Activated CD8-positive, alpha-beta memory T cell treated with anti-CD3 and anti-CD28 coated beads, Interleukin-2, amount 10 ng/mL, durations not matched to agents 7 days and 5 days (primary cell): ENCODE measurements at regions of chr4 and their contacts with region 1.

Region 1: DNA sequence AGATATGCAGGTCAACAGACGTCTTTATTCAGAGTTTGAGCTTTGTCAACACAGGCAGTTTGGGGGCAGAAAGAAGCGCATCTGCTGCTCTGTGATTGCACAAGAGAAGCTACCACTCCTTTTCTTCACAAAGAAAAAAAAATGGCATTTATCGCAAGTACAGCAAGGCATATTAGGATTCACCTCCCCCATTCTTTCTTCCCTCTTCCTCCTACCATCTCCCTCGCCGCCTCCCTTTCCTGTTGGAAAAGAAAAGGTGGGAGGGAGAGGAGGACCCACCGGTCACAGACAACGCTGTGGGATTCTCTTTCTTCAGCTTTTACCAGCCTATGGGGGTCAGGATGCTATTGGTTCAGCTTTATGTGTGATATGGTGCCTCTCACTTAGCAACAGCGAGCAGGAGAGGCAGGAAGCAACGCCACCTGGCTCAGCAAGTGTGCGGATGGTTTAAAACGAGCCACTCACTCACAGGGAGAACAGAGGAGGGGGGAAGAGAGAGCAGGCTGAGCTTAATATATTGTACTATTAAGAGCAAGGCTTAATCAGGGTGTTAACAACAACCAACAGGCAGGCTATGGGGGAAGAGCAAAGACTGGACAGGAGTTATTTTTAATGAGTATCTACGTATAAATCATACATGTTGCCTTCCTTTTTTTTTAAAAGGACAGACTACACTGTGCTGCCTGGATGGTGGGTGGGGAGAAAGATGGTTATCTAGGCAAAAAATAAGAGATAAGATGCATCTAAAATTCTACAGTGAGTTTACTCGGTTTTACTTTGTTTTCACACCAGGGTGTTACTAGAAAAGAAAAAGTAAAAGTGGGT is 104.7 kb downstream of the MAML3 start:
- DNase-seq: peak; percentile 70
- ATAC-seq: peak; percentile 92
- H3K4me3 Mint-ChIP-seq: peak overlapping the region; percentile 71
- H3K27ac Mint-ChIP-seq: peak overlapping the region; percentile 76
- H3K4me1 Mint-ChIP-seq: peaks cover 42% of the 10 kb centered on the region
- H3K27me3 Mint-ChIP-seq: peaks cover 50% of the 10 kb centered on the region

Region 2: DNA sequence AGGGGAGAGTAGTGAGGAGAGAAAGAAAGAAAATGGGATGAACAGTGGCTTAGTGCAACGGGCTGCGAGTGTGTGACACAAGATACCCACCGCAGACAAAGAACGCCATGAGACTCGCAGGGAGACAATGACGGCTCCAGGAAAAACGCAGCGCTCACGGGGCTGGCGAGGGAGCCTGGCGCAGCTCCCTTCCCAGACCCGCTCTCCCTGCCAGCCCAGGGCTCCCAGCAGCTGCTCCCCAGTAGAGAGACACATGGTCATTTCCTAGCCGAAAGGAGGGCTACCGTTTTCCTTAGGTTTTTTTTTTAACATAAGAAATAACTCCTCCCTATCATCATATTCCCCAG is 44.7 kb before region 1 on chr4:
- CTCF ChIA-PET with region 1: no interaction called
- DNase-seq: no peak
- ATAC-seq: no peak
- H3K4me3 Mint-ChIP-seq: no peak overlapping the region
- H3K27ac Mint-ChIP-seq: no peak overlapping the region
- H3K4me1 Mint-ChIP-seq: no peaks in the 10 kb centered on the region
- H3K27me3 Mint-ChIP-seq: peaks cover 33% of the 10 kb centered on the region

Region 3: DNA sequence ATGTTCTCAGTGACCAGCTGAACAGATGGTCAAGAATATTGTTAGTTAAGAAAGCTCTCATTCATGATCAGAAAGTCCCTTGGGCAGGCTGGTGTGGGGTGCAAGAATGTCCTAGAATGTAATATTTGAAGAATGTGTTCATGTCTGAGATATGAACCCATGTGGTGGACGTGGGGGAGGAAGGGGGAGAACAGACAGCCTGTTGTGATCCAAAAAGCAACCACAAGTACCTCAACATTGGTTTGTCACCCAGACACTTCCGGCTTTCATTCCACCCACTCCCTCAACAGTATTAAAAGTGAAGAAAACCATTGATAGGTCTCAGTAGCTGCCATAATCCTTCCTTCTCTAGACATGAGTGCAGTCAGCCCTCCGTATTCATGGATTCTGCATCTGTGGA is 22.6 kb after region 1 on chr4:
- CTCF ChIA-PET with region 1: interaction called, 12 read pairs
- DNase-seq: peak; percentile 90
- ATAC-seq: peak; percentile 79
- H3K4me3 Mint-ChIP-seq: peak overlapping the region; percentile 61
- H3K27ac Mint-ChIP-seq: peak overlapping the region; percentile 86
- H3K4me1 Mint-ChIP-seq: peaks cover 51% of the 10 kb centered on the region
- H3K27me3 Mint-ChIP-seq: peaks cover 41% of the 10 kb centered on the region

Region 4: DNA sequence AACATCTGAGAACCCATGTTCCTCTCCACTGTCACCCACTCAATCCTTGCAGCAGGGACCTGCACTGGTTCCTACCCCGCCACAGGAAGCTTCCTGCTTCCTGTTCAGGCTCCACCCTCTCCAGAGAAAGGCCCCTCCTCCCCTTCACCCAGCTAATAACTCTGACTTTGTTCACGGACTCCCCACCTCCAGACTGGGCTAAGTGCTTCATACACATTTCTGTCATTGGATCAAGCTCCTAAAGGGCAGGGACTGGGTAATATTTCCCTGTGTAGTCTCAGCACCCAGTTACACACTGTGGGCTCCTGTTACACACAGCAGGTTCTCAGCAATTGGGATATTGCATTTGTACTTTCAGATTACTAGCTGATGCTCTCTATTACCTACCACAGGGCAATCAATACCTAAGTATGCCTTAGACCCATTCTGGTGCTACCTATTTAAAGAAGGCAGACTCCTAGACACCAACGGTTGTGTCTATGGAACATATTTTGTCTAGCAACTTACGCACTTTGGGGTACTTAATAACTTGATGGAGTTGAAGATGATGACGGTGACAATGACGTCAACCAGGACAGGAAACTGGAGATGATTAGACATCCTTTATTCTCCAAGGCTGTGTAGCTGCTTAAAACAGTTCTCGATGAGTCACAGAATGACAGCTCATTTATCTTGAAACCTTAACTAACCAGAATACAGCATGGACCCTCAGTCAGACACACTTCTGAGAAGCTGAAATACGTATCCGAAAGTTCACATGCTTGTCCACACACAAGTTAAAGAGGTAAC is 46.7 kb after region 1 on chr4:
- CTCF ChIA-PET with region 1: interaction called, 15 read pairs
- DNase-seq: peak; percentile 85
- ATAC-seq: peak; percentile 86
- H3K4me3 Mint-ChIP-seq: peak overlapping the region; percentile 75
- H3K27ac Mint-ChIP-seq: peak overlapping the region; percentile 94
- H3K4me1 Mint-ChIP-seq: peaks cover 91% of the 10 kb centered on the region
- H3K27me3 Mint-ChIP-seq: no peaks in the 10 kb centered on the region

Region 5: GRCh38 chr4:140153718-140154571 is 104.7 kb after region 1 on chr4 and contains the start of gene MAML3:
- CTCF ChIA-PET with region 1: interaction called, 20 read pairs
- DNase-seq: peak; percentile 90
- ATAC-seq: peak; percentile 53
- H3K4me3 Mint-ChIP-seq: peak within 1 kb of the TSS; percentile 88
- H3K27ac Mint-ChIP-seq: peak within 1 kb of the TSS; percentile 80
- H3K4me1 Mint-ChIP-seq: peaks cover 42% of the 10 kb centered on the region
- H3K27me3 Mint-ChIP-seq: peaks cover 47% of the 10 kb centered on the region
- total RNA-seq, gene MAML3: 1.8 to 4.3 TPM

Region 6: GRCh38 chr4:140296335-140297220 is 247.3 kb after region 1 on chr4:
- CTCF ChIA-PET with region 1: no interaction called
- DNase-seq: no peak
- ATAC-seq: no peak
- H3K4me3 Mint-ChIP-seq: no peak overlapping the region
- H3K27ac Mint-ChIP-seq: no peak overlapping the region
- H3K4me1 Mint-ChIP-seq: no peaks in the 10 kb centered on the region
- H3K27me3 Mint-ChIP-seq: peaks cover 3% of the 10 kb centered on the region